ENCODE measurements at regions of chr7 and their contacts with region 1.

Region 1: DNA sequence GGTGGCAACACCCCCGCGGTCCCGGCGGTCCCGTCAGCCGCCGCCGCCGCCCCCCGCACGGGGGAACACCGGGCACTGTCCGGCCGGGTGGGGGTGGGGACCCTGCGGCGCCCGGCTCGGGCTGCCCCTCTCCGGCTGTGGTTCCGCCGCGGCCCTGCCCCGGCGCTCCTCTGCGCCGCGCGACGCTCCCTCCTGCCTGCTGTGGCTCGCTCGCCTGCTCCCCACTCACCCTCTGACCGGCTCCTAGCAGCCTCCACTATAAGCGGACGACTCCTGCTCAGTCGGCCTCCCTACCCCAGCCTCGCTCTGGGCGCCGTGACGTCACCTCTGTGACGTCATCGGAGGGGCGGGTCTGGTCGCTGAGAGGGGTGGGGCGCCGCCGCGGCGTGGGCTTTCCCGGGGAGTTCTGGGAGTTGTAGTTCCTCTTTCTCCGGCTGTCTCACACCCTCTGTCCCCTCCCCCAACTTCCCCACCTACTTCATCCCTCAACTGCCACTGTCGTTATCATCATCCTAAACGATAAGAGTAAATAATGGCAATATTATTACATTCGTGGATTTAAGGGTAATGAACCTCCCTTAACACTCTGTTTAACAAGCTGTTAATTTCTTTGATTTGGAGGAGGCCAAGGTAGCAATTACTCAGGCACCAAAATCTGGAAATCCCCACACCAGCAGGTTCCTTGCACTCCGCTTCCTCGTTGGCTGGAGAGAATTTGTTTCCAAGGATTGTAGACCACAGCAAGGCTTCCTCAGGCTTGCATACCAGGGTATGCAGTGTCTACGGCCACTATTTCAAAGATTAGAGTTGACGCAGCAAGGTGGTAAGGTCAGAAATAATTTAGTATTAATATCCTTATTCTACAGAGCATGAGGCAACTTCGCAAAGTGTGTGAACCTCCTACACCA is at the start of gene UBE2H:
- DNase-seq: peak; percentile 86 to 97 (median 93)
- ATAC-seq: peak; percentile 76
- H3K4me3 ChIP-seq: peak within 1 kb of the TSS; percentile 81 to 83
- H3K4me3 Mint-ChIP-seq: peak within 1 kb of the TSS; percentile 100
- H3K27ac ChIP-seq: peak within 1 kb of the TSS; percentile 89 to 91
- H3K27ac Mint-ChIP-seq: peak within 1 kb of the TSS; percentile 99
- H3K4me1 ChIP-seq: peaks cover 38% of the 10 kb centered on the region
- H3K4me1 Mint-ChIP-seq: peaks cover 9% of the 10 kb centered on the region
- H3K27me3 ChIP-seq: no peaks in the 10 kb centered on the region
- H3K27me3 Mint-ChIP-seq: no peaks in the 10 kb centered on the region
- CTCF ChIP-seq: no peak
- total RNA-seq, gene UBE2H: 53.7 to 63.6 TPM

Region 2: DNA sequence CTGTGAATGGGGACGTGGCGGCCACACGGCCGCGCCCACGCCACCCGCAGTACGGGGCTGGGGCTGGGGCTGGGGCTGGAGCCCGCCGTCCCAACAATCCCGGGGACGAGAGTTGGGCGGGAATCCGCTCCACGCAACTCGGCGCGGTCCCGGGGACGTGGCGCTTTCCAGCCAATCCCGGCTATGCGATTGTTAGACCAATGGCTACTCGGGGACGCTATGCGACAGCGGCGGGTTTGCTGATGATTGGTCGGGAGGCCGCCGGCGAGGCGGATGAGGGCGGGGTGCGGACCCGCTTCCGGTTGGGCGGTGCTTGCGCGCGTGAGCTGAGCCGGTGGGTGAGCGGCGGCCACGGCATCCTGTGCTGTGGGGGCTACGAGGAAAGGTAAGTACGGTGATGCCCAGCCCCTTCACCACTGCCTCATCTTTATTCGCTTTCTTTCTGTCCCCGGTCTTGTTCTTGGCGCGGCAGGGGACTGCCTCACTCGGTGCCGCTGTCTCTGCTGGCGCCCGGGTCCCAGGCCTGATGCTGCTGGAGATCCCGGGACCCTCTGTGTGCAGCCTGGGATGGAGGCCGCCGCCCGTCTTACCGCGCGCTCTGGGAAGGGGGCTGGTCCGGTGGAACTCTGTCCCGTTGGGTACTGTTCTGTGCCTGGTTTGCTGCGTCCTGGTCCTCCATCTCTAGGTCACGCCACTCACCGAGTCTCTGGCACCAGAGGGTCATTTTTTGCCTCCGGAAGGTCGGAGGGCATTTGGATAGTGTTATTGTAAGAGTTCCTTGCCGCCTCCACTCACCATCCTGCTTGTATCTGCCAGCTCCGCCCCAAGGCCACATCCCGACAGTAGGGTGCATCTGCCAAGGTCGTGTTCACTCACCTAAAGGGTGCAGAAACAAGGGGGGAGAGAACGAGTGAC is 1213.6 kb before region 1 on chr7 and contains the start of gene CALU:
- CTCF ChIA-PET with region 1: no interaction called
- POLR2A ChIA-PET with region 1: no interaction called
- intact Hi-C with region 1: loop called (anchors 2 to 5 kb)
- DNase-seq: peak; percentile 84 to 96 (median 94)
- ATAC-seq: peak; percentile 91
- H3K4me3 ChIP-seq: peak within 1 kb of the TSS; percentile 90 to 93
- H3K4me3 Mint-ChIP-seq: peak within 1 kb of the TSS; percentile 98
- H3K27ac ChIP-seq: peak within 1 kb of the TSS; percentile 90 to 92
- H3K27ac Mint-ChIP-seq: peak within 1 kb of the TSS; percentile 96
- H3K4me1 ChIP-seq: peaks cover 18% of the 10 kb centered on the region
- H3K4me1 Mint-ChIP-seq: peaks cover 44% of the 10 kb centered on the region
- H3K27me3 ChIP-seq: no peaks in the 10 kb centered on the region
- H3K27me3 Mint-ChIP-seq: no peaks in the 10 kb centered on the region
- CTCF ChIP-seq: no peak
- total RNA-seq, gene CALU: 29.9 to 31.9 TPM

Region 3: DNA sequence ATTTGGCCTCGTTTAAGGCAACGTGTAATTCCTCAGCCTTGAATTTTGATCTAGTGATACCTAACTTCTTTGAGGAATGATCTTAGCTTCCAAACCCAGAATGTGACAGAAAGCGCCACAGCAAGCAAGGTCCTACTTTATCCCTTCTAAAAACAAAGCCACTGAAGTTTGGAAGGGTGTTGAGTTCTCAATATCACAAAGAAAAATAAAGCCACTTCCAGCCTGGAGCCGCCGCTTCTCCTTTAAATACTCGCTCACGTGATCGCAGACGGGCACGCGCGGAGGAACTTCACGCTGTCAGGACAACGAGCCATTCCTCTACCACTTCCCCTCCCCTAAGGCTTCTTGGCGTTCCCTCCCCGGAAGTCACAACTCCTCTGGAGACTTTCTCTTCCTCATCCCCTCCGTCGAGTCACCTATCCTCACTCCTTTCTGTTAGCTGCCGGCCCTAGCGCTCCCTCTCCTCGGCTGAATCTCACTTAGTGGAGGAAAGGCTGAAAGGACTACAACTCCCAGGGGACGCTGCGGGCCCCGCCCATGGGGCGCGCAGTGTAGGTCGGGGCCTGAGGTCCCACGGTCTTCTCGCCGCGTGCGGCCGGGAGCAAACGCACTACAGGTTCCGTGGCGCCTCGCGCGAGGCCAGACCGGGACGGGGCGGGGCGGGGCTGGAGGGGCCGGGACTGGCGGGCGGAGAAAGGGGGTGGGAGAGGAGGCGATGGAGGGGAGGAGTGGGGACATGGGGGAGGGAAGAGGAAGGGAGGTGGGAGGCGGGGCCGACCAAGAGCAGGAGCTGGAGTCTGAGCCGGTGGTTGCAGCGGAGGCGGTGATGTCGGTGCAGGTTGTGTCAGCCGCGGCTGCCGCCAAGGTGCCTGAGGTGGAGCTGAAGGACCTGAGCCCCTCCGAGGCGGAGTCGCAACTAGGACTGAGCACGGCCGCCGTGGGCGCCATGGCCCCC is 728.4 kb before region 1 on chr7 and contains the start of gene AHCYL2:
- CTCF ChIA-PET with region 1: no interaction called
- POLR2A ChIA-PET with region 1: no interaction called
- intact Hi-C with region 1: loop called (anchors 1 to 5 kb)
- DNase-seq: peak; percentile 96 to 99 (median 97)
- ATAC-seq: peak; percentile 87
- H3K4me3 ChIP-seq: peak within 1 kb of the TSS; percentile 71 to 96
- H3K4me3 Mint-ChIP-seq: peak within 1 kb of the TSS; percentile 95
- H3K27ac ChIP-seq: peak within 1 kb of the TSS; percentile 76 to 91
- H3K27ac Mint-ChIP-seq: peak within 1 kb of the TSS; percentile 93
- H3K4me1 ChIP-seq: peaks cover 26% of the 10 kb centered on the region
- H3K4me1 Mint-ChIP-seq: peaks cover 44% of the 10 kb centered on the region
- H3K27me3 ChIP-seq: no peaks in the 10 kb centered on the region
- H3K27me3 Mint-ChIP-seq: no peaks in the 10 kb centered on the region
- CTCF ChIP-seq: no peak
- total RNA-seq, gene AHCYL2: 3.1 to 5.8 TPM

Region 4: GRCh38 chr7:129611246-129612111 is 341.4 kb before region 1 on chr7 and contains the start of gene NRF1:
- CTCF ChIA-PET with region 1: no interaction called
- POLR2A ChIA-PET with region 1: no interaction called
- intact Hi-C with region 1: loop called (anchors 2 to 5 kb)
- DNase-seq: peak; percentile 82 to 97 (median 91)
- ATAC-seq: peak; percentile 87
- H3K4me3 ChIP-seq: peak within 1 kb of the TSS; percentile 87 to 91
- H3K4me3 Mint-ChIP-seq: peak within 1 kb of the TSS; percentile 97
- H3K27ac ChIP-seq: peak within 1 kb of the TSS; percentile 68 to 85
- H3K27ac Mint-ChIP-seq: peak within 1 kb of the TSS; percentile 96
- H3K4me1 ChIP-seq: peaks cover 40% of the 10 kb centered on the region
- H3K4me1 Mint-ChIP-seq: peaks cover 67% of the 10 kb centered on the region
- H3K27me3 ChIP-seq: no peaks in the 10 kb centered on the region
- H3K27me3 Mint-ChIP-seq: no peaks in the 10 kb centered on the region
- CTCF ChIP-seq: no peak
- total RNA-seq, gene NRF1: 31.9 to 34.9 TPM

Region 5: GRCh38 chr7:129914536-129915272 is 38.2 kb before region 1 on chr7:
- CTCF ChIA-PET with region 1: no interaction called
- POLR2A ChIA-PET with region 1: no interaction called
- intact Hi-C with region 1: loop called in 1 of 2 experiments (anchors 2 kb)
- DNase-seq: peak in 5 of 9 experiments; percentile 3 to 69 (median 20)
- ATAC-seq: peak; percentile 44
- H3K4me3 ChIP-seq: no peak overlapping the region
- H3K4me3 Mint-ChIP-seq: peak overlapping the region; percentile 50
- H3K27ac ChIP-seq: peak overlapping the region in 1 of 2 experiments; percentile 46
- H3K27ac Mint-ChIP-seq: peak overlapping the region; percentile 70
- H3K4me1 ChIP-seq: peaks cover 38% of the 10 kb centered on the region
- H3K4me1 Mint-ChIP-seq: peaks cover 72% of the 10 kb centered on the region
- H3K27me3 ChIP-seq: no peaks in the 10 kb centered on the region
- H3K27me3 Mint-ChIP-seq: no peaks in the 10 kb centered on the region
- CTCF ChIP-seq: no peak

Region 6: GRCh38 chr7:130069978-130070860 is 117.3 kb after region 1 on chr7 and contains the start of gene KLHDC10:
- CTCF ChIA-PET with region 1: no interaction called
- POLR2A ChIA-PET with region 1: no interaction called
- intact Hi-C with region 1: loop called (anchors 2 to 5 kb)
- DNase-seq: peak; percentile 89 to 99 (median 96)
- ATAC-seq: peak; percentile 93
- H3K4me3 ChIP-seq: peak within 1 kb of the TSS; percentile 67 to 72
- H3K4me3 Mint-ChIP-seq: peak within 1 kb of the TSS; percentile 87
- H3K27ac ChIP-seq: peak within 1 kb of the TSS; percentile 76 to 85
- H3K27ac Mint-ChIP-seq: peak within 1 kb of the TSS; percentile 92
- H3K4me1 ChIP-seq: peaks cover 22% of the 10 kb centered on the region
- H3K4me1 Mint-ChIP-seq: peaks cover 45% of the 10 kb centered on the region
- H3K27me3 ChIP-seq: peaks cover 0 to 2% of the 10 kb centered on the region in 2 experiments
- H3K27me3 Mint-ChIP-seq: no peaks in the 10 kb centered on the region
- CTCF ChIP-seq: no peak
- total RNA-seq, gene KLHDC10: 9.6 to 9.9 TPM

Region 7: DNA sequence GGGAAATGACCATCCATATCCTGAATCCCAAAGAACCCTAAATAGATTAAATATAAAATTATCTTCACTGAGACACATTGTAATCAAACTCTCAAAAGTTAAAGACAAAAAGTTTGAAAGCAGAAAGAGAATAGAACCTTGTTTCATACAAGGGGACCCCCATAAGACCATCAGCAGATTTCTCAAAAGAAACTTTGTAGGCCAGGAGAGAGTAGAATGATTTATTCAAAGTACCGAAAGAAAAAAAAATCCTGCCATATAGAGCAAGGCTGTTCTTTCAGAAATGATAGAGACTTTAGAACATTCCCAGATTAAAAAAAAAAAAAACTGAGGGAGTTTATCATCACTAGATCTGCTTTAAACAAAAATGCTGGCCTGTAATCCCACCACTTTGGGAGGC is 815.9 kb after region 1 on chr7:
- CTCF ChIA-PET with region 1: no interaction called
- POLR2A ChIA-PET with region 1: no interaction called
- intact Hi-C with region 1: no loop called
- DNase-seq: no peak
- ATAC-seq: no peak
- H3K4me3 ChIP-seq: no peak overlapping the region
- H3K4me3 Mint-ChIP-seq: no peak overlapping the region
- H3K27ac ChIP-seq: no peak overlapping the region
- H3K27ac Mint-ChIP-seq: no peak overlapping the region
- H3K4me1 ChIP-seq: no peaks in the 10 kb centered on the region
- H3K4me1 Mint-ChIP-seq: no peaks in the 10 kb centered on the region
- H3K27me3 ChIP-seq: peaks cover 0 to 2% of the 10 kb centered on the region in 2 experiments
- H3K27me3 Mint-ChIP-seq: peaks cover 23% of the 10 kb centered on the region
- CTCF ChIP-seq: no peak

Region 8: GRCh38 chr7:131107337-131108211 is 1154.7 kb after region 1 on chr7:
- CTCF ChIA-PET with region 1: no interaction called
- POLR2A ChIA-PET with region 1: no interaction called
- intact Hi-C with region 1: loop called in 1 of 2 experiments (anchors 10 kb)
- DNase-seq: peak; percentile 47 to 93 (median 77)
- ATAC-seq: peak; percentile 16
- H3K4me3 ChIP-seq: peak overlapping the region; percentile 98 to 99
- H3K4me3 Mint-ChIP-seq: peak overlapping the region; percentile 88
- H3K27ac ChIP-seq: peak overlapping the region; percentile 98 to 100
- H3K27ac Mint-ChIP-seq: peak overlapping the region; percentile 94
- H3K4me1 ChIP-seq: peaks cover 58% of the 10 kb centered on the region
- H3K4me1 Mint-ChIP-seq: peaks cover 71% of the 10 kb centered on the region
- H3K27me3 ChIP-seq: no peaks in the 10 kb centered on the region
- H3K27me3 Mint-ChIP-seq: no peaks in the 10 kb centered on the region
- CTCF ChIP-seq: no peak